Activated T-helper 1 cell treated with anti-CD3 and anti-CD28 coated beads, Interleukin-12 subunit alpha, Interleukin-12 subunit beta, Interleukin-2, Interleukin-4 antibody, amounts not matched to agents 30 ng/mL and 10 ng/mL and 1 ng/mL, durations not matched to agents 14 hours and 24 hours and 36 hours (primary cell): ENCODE measurements at regions of chr4 and their contacts with region 1.

Region 1: DNA sequence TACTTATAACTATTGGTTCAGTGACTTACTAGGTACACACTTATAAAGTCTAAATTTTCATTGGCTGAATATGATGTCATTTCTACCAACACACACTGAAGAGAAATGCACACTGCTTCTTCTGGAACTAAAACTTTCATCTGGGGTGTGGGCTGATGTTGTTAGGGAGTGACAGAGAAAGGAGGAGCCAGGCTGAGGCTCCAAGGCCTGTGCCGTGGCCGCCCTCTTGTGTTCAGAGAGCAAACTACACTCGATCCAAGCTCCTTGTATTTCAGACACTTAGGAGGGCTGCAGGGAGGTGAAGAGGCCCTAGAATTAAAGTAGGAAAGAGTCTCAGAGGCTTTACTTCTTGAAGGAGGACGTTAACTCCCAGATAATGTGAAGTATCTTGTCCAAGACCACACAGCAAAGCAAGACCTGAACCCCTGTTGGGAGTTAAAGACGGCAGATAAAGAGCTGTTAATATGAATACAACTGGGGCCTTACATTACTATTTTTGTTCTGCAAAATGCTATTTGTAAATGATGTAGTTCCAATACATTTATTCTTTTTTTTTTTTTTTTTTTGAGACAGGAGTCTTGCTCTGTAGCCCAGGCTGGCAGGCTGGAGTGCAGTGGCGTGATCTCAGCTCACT is 137.5 kb downstream of the AFAP1 start:
- DNase-seq: peak; percentile 63
- H3K4me3 Mint-ChIP-seq: no peak overlapping the region
- H3K27ac Mint-ChIP-seq: no peak overlapping the region
- H3K4me1 Mint-ChIP-seq: peaks cover 11% of the 10 kb centered on the region
- H3K27me3 Mint-ChIP-seq: no peaks in the 10 kb centered on the region

Region 2: DNA sequence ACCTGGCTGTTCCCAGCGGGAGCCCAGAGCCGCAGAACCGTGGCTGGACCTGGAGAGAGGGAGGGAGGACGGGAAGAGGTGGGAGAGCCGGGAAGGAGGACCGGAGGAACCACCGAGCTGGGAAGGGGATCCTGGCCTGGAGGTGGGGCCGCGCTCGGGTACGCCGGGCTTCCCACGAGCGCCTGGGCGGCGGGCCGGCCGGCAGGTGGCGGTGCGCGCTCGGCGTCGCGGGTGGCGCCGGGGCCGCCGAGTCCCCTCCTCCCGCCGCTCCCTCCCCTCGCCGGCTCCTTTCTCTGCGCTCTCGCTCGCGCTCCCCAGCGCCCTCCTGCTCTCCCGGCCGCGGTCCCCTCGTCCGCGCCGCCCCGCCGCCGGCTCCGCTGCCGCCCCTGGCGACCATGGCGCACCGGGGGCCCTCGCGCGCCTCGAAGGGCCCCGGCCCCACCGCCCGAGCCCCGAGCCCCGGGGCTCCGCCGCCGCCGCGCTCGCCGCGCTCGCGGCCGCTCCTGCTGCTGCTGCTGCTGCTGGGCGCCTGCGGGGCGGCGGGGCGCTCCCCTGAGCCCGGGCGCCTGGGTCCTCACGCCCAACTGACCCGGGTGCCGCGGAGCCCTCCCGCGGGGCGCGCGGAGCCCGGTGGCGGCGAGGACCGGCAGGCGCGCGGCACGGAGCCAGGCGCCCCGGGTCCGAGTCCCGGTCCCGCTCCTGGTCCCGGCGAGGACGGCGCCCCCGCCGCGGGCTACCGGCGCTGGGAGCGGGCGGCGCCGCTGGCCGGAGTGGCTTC is 609.8 kb before region 1 on chr4 and contains the start of gene SORCS2:
- intact Hi-C with region 1: loop called (anchors 5 kb)
- DNase-seq: peak; percentile 28
- H3K4me3 Mint-ChIP-seq: no peak within 1 kb of the TSS
- H3K27ac Mint-ChIP-seq: no peak within 1 kb of the TSS
- H3K4me1 Mint-ChIP-seq: no peaks in the 10 kb centered on the region
- H3K27me3 Mint-ChIP-seq: peaks cover 44% of the 10 kb centered on the region
- total RNA-seq, gene SORCS2: not detected in 2 replicates

Region 3: GRCh38 chr4:7761720-7762119 is 40.5 kb before region 1 on chr4:
- intact Hi-C with region 1: loop called (anchors 1 kb)
- DNase-seq: peak; percentile 26
- H3K4me3 Mint-ChIP-seq: no peak overlapping the region
- H3K27ac Mint-ChIP-seq: no peak overlapping the region
- H3K4me1 Mint-ChIP-seq: peaks cover 43% of the 10 kb centered on the region
- H3K27me3 Mint-ChIP-seq: no peaks in the 10 kb centered on the region

Region 4: GRCh38 chr4:7843831-7844593 is 41.8 kb after region 1 on chr4:
- intact Hi-C with region 1: loop called (anchors 1 kb)
- DNase-seq: peak; percentile 43
- H3K4me3 Mint-ChIP-seq: no peak overlapping the region
- H3K27ac Mint-ChIP-seq: peak overlapping the region; percentile 76
- H3K4me1 Mint-ChIP-seq: peaks cover 20% of the 10 kb centered on the region
- H3K27me3 Mint-ChIP-seq: peaks cover 2% of the 10 kb centered on the region

Region 5: DNA sequence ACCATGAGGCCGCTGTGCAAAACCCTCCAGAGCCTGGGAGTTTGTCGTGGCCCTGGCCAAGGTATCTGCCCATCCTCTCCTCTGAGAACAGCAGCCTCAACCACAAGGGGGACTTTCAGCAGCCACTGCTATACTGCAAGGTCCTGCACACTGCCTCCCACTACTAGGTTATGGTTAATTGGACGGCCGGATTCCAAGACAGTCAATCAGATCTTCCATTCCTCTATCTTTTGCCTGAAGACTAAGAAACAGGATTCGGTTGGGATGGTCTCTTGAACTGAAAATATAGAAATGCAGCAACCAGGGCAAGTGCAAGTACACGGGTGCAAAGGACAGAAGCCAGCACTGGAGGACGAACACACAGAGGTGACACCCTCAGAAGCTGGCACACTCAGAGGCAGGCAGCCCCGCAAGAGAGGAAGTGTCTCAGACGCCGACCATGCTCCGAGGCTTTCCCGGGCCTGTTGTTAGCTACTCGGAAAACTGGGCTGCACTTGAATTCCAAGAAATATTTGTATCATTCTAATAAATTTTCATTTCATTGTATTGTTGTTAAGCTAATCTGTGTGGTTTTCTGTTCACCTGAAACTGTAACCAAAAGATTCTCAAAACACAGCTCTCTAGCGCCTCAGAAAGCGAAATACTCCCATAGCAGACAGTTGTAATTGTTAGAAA is 74.1 kb after region 1 on chr4:
- intact Hi-C with region 1: loop called (anchors 5 kb)
- DNase-seq: no peak
- H3K4me3 Mint-ChIP-seq: peak overlapping the region; percentile 58
- H3K27ac Mint-ChIP-seq: peak overlapping the region; percentile 14
- H3K4me1 Mint-ChIP-seq: peaks cover 41% of the 10 kb centered on the region
- H3K27me3 Mint-ChIP-seq: no peaks in the 10 kb centered on the region